Activated CD4-positive, alpha-beta memory T cell treated with anti-CD3 and anti-CD28 coated beads for 36 hours (primary cell): ENCODE measurements at regions of chr2 and their contacts with region 1.

Region 1: DNA sequence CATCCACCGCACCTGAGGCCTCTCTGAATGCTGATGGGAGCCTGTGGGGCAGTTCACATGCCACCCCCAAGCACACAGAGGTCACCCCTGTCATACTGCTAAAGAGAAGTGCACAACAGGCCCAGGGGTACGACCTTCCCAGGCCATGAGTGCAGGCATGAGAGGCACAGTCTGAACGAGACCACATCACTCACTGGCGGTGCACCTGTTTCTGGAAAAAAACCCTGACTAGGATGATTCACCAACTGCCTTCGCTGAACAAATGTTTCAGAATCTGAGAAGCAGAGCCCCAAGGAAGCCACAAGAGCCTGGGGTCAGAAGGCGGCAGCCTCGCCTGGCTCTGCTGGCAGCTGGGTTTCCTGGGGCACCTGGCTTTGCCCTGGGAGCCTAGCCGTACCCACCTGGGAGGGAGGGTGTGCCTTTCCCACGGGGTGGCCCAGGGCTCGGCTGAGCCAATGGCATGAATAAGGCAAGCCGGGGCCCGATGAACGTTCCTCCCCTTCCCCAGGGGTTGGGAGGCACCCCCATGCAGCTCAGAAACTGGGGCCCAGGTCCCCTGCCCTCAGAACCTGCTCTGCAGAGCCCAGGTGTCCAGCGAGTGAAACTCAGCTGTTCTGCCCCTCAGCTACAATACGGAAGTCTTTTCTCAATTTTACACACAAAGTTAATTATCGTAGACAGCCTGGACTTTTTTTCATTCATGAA is 73.8 kb downstream of the HDAC4 start:
- DNase-seq: peak; percentile 90
- H3K4me3 Mint-ChIP-seq: peak overlapping the region; percentile 35
- H3K27ac Mint-ChIP-seq: peak overlapping the region; percentile 82
- H3K4me1 Mint-ChIP-seq: peaks cover 61% of the 10 kb centered on the region
- H3K27me3 Mint-ChIP-seq: no peaks in the 10 kb centered on the region

Region 2: GRCh38 chr2:239275044-239275685 is 51.8 kb before region 1 on chr2:
- CTCF ChIA-PET with region 1: interaction called, 4 read pairs
- POLR2A ChIA-PET with region 1: interaction called, 3 read pairs
- intact Hi-C with region 1: loop called (anchors 1 kb)
- DNase-seq: peak; percentile 92
- H3K4me3 Mint-ChIP-seq: peak overlapping the region; percentile 61
- H3K27ac Mint-ChIP-seq: peak overlapping the region; percentile 75
- H3K4me1 Mint-ChIP-seq: peaks cover 48% of the 10 kb centered on the region
- H3K27me3 Mint-ChIP-seq: peaks cover 29% of the 10 kb centered on the region

Region 3: GRCh38 chr2:239298116-239298804 is 28.7 kb before region 1 on chr2:
- CTCF ChIA-PET with region 1: interaction called, 4 read pairs
- POLR2A ChIA-PET with region 1: interaction called, 3 read pairs
- intact Hi-C with region 1: loop called (anchors 1 kb)
- DNase-seq: peak; percentile 90
- H3K4me3 Mint-ChIP-seq: peak overlapping the region; percentile 71
- H3K27ac Mint-ChIP-seq: peak overlapping the region; percentile 76
- H3K4me1 Mint-ChIP-seq: peaks cover 65% of the 10 kb centered on the region
- H3K27me3 Mint-ChIP-seq: peaks cover 12% of the 10 kb centered on the region

Region 4: GRCh38 chr2:239316562-239317465 is 10.2 kb before region 1 on chr2:
- CTCF ChIA-PET with region 1: no interaction called
- POLR2A ChIA-PET with region 1: no interaction called
- intact Hi-C with region 1: no loop called
- DNase-seq: no peak
- H3K4me3 Mint-ChIP-seq: no peak overlapping the region
- H3K27ac Mint-ChIP-seq: no peak overlapping the region
- H3K4me1 Mint-ChIP-seq: peaks cover 52% of the 10 kb centered on the region
- H3K27me3 Mint-ChIP-seq: no peaks in the 10 kb centered on the region

Region 5: DNA sequence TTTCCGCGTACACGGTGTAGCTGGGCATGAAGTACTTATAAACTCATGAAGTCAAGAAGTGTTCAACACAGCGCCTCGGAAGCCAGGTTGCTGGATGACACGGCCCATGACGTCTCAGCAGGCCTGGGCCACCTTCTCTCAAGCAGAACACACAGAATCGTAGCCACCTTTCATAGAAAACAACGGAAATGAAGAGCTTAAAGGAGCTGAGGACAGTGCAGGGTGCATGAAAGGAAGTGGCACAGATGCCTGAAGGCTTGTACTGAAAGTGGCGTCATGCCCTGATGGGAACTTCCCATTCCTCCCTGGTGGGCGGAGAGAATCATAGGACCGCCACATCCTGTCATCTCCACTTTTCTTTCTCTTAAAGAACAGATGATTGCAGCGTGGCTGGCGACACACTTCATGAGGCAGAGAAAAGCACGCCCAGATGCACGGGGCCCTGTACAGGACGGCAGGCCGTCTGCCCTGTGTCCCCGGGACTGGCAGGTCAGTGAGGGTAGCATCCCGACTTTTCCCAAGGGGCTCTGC is 42.7 kb after region 1 on chr2:
- CTCF ChIA-PET with region 1: no interaction called
- POLR2A ChIA-PET with region 1: no interaction called
- intact Hi-C with region 1: loop called (anchors 1 kb)
- DNase-seq: peak; percentile 93
- H3K4me3 Mint-ChIP-seq: peak overlapping the region; percentile 68
- H3K27ac Mint-ChIP-seq: peak overlapping the region; percentile 92
- H3K4me1 Mint-ChIP-seq: peaks cover 8% of the 10 kb centered on the region
- H3K27me3 Mint-ChIP-seq: no peaks in the 10 kb centered on the region

Region 6: GRCh38 chr2:239544143-239544917 is 217.3 kb after region 1 on chr2:
- CTCF ChIA-PET with region 1: no interaction called
- POLR2A ChIA-PET with region 1: no interaction called
- intact Hi-C with region 1: loop called (anchors 10 kb)
- DNase-seq: no peak
- H3K4me3 Mint-ChIP-seq: no peak overlapping the region
- H3K27ac Mint-ChIP-seq: peak overlapping the region; percentile 54
- H3K4me1 Mint-ChIP-seq: peaks cover 44% of the 10 kb centered on the region
- H3K27me3 Mint-ChIP-seq: peaks cover 17% of the 10 kb centered on the region